A673 (cell line): ENCODE measurements at regions of chr9 and their contacts with region 1.

Region 1: GRCh38 chr9:129783516-129784361 is 19.2 kb upstream of the TOR1B start:
- DNase-seq: peak; percentile 87
- H3K4me3 ChIP-seq: no peak overlapping the region
- H3K27ac ChIP-seq: no peak overlapping the region
- H3K4me1 ChIP-seq: no peaks in the 10 kb centered on the region
- H3K27me3 ChIP-seq: peaks cover 8% of the 10 kb centered on the region
- CTCF ChIP-seq: peak; percentile 93

Region 2: GRCh38 chr9:129641746-129642513 is 141.8 kb before region 1 on chr9 and contains the start of gene ASB6:
- CTCF ChIA-PET with region 1: no interaction called
- POLR2A ChIA-PET with region 1: no interaction called
- intact Hi-C with region 1: loop called (anchors 5 kb)
- DNase-seq: peak; percentile 92
- H3K4me3 ChIP-seq: peak within 1 kb of the TSS; percentile 91
- H3K27ac ChIP-seq: peak within 1 kb of the TSS; percentile 85
- H3K4me1 ChIP-seq: peaks cover 14% of the 10 kb centered on the region
- H3K27me3 ChIP-seq: no peaks in the 10 kb centered on the region
- CTCF ChIP-seq: peak; percentile 99
- total RNA-seq, gene ASB6: 30.4 and 36.5 TPM in 2 replicates

Region 3: GRCh38 chr9:130104491-130105193 is 320.9 kb after region 1 on chr9:
- CTCF ChIA-PET with region 1: no interaction called
- POLR2A ChIA-PET with region 1: no interaction called
- intact Hi-C with region 1: no loop called
- DNase-seq: no peak
- H3K4me3 ChIP-seq: no peak overlapping the region
- H3K27ac ChIP-seq: peak overlapping the region; percentile 18
- H3K4me1 ChIP-seq: peaks cover under 1% of the 10 kb centered on the region
- H3K27me3 ChIP-seq: no peaks in the 10 kb centered on the region
- CTCF ChIP-seq: no peak